CD8-positive, alpha-beta T cell (primary cell): ENCODE measurements at regions of chr14 and their contacts with region 1.

Region 1: DNA sequence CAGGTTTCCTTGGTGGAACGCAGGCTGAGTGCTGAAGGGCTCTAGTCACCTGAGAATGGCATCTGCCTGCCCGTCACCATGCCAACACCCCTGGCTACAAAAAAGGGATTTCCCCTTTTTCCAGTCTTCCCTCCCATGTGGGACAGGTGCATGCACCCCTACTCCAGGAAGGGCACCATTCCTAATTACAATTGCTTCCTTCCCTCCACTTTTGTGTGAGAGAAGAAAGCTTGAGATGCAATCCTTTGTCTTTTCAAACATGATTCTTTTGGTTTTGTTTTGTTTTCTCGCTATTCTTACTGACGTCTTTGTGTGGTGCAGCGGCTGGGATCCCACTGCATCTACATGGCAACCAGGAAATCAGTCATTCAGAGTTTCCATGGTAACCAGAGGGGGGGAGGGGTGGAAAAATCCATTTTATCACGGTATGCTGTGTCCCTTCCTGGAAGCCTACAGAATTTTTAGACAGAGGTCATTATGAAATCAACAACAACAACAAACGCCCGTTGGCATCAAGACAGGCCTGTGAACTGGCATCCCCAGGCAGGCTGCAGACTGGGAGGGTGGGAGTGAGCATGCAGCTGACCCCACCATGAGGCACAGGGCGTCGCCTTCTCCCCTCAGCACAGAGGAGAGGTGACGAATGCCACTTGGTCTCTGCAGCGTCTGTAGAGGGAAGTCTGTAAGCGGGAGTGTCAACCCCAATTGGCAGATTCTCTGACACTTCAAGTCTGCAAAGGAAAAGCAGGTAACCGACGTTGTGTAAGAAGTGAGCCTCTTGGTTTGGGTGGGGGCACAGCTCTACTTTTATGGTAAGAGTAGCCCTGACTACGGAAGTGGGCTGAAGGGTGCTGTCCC is 13.6 kb upstream of the GNG2 start:
- DNase-seq: peak; percentile 68 to 99 (median 85)
- ATAC-seq: peak; percentile 86
- H3K4me3 ChIP-seq: peak overlapping the region; percentile 47 to 53
- H3K4me3 Mint-ChIP-seq: peak overlapping the region; percentile 91
- H3K27ac ChIP-seq: peak overlapping the region; percentile 97 to 100
- H3K27ac Mint-ChIP-seq: peak overlapping the region; percentile 97
- H3K4me1 ChIP-seq: peaks cover 34% of the 10 kb centered on the region
- H3K4me1 Mint-ChIP-seq: peaks cover 64% of the 10 kb centered on the region
- H3K27me3 ChIP-seq: no peaks in the 10 kb centered on the region
- H3K27me3 Mint-ChIP-seq: no peaks in the 10 kb centered on the region
- CTCF ChIP-seq: no peak

Region 2: GRCh38 chr14:50311975-50312733 is 1534.7 kb before region 1 on chr14 and contains the starts of genes DMAC2L and L2HGDH:
- CTCF ChIA-PET with region 1: no interaction called
- POLR2A ChIA-PET with region 1: no interaction called
- intact Hi-C with region 1: loop called in 1 of 2 experiments (anchors 2 kb)
- DNase-seq: peak; percentile 67 to 95 (median 87)
- ATAC-seq: peak; percentile 88
- H3K4me3 ChIP-seq: peak within 1 kb of the TSS; percentile 65 to 72
- H3K4me3 Mint-ChIP-seq: peak within 1 kb of the TSS; percentile 95
- H3K27ac ChIP-seq: peak within 1 kb of the TSS; percentile 74 to 93
- H3K27ac Mint-ChIP-seq: peak within 1 kb of the TSS; percentile 99
- H3K4me1 ChIP-seq: peaks cover 15% of the 10 kb centered on the region
- H3K4me1 Mint-ChIP-seq: peaks cover 41% of the 10 kb centered on the region
- H3K27me3 ChIP-seq: no peaks in the 10 kb centered on the region
- H3K27me3 Mint-ChIP-seq: no peaks in the 10 kb centered on the region
- CTCF ChIP-seq: no peak
- total RNA-seq, gene DMAC2L: 16.6 to 17.8 TPM
- total RNA-seq, gene L2HGDH: 2.6 to 3.0 TPM

Region 3: GRCh38 chr14:51651388-51652167 is 195.3 kb before region 1 on chr14 and contains the start of gene FRMD6:
- CTCF ChIA-PET with region 1: no interaction called
- POLR2A ChIA-PET with region 1: no interaction called
- intact Hi-C with region 1: loop called (anchors 1 to 5 kb)
- DNase-seq: peak; percentile 58 to 90 (median 76)
- ATAC-seq: peak; percentile 82
- H3K4me3 ChIP-seq: peak within 1 kb of the TSS; percentile 87 to 94
- H3K4me3 Mint-ChIP-seq: peak within 1 kb of the TSS; percentile 85
- H3K27ac ChIP-seq: peak within 1 kb of the TSS; percentile 55 to 73
- H3K27ac Mint-ChIP-seq: peak within 1 kb of the TSS; percentile 73
- H3K4me1 ChIP-seq: peaks cover 19% of the 10 kb centered on the region
- H3K4me1 Mint-ChIP-seq: peaks cover 17% of the 10 kb centered on the region
- H3K27me3 ChIP-seq: peaks cover 6 to 16% of the 10 kb centered on the region in 2 experiments
- H3K27me3 Mint-ChIP-seq: peaks cover 21% of the 10 kb centered on the region
- CTCF ChIP-seq: peak; percentile 70
- total RNA-seq, gene FRMD6: 2.4 to 3.5 TPM

Region 4: GRCh38 chr14:51818748-51819380 is 28.0 kb before region 1 on chr14:
- CTCF ChIA-PET with region 1: no interaction called
- POLR2A ChIA-PET with region 1: no interaction called
- intact Hi-C with region 1: no loop called
- DNase-seq: no peak
- ATAC-seq: no peak
- H3K4me3 ChIP-seq: no peak overlapping the region
- H3K4me3 Mint-ChIP-seq: no peak overlapping the region
- H3K27ac ChIP-seq: no peak overlapping the region
- H3K27ac Mint-ChIP-seq: no peak overlapping the region
- H3K4me1 ChIP-seq: no peaks in the 10 kb centered on the region
- H3K4me1 Mint-ChIP-seq: no peaks in the 10 kb centered on the region
- H3K27me3 ChIP-seq: no peaks in the 10 kb centered on the region
- H3K27me3 Mint-ChIP-seq: peaks cover 5% of the 10 kb centered on the region
- CTCF ChIP-seq: no peak

Region 5: GRCh38 chr14:51860164-51860824 is 13.4 kb after region 1 on chr14 and contains the start of gene GNG2:
- CTCF ChIA-PET with region 1: interaction called, 12 read pairs
- POLR2A ChIA-PET with region 1: interaction called, 49 read pairs
- intact Hi-C with region 1: loop called (anchors 1 kb)
- DNase-seq: peak; percentile 71 to 94 (median 83)
- ATAC-seq: peak; percentile 95
- H3K4me3 ChIP-seq: peak within 1 kb of the TSS; percentile 86 to 90
- H3K4me3 Mint-ChIP-seq: peak within 1 kb of the TSS; percentile 98
- H3K27ac ChIP-seq: peak within 1 kb of the TSS; percentile 88
- H3K27ac Mint-ChIP-seq: peak within 1 kb of the TSS; percentile 95
- H3K4me1 ChIP-seq: peaks cover 50% of the 10 kb centered on the region
- H3K4me1 Mint-ChIP-seq: peaks cover 66% of the 10 kb centered on the region
- H3K27me3 ChIP-seq: no peaks in the 10 kb centered on the region
- H3K27me3 Mint-ChIP-seq: no peaks in the 10 kb centered on the region
- CTCF ChIP-seq: no peak
- total RNA-seq, gene GNG2: 166 to 169 TPM

Region 6: DNA sequence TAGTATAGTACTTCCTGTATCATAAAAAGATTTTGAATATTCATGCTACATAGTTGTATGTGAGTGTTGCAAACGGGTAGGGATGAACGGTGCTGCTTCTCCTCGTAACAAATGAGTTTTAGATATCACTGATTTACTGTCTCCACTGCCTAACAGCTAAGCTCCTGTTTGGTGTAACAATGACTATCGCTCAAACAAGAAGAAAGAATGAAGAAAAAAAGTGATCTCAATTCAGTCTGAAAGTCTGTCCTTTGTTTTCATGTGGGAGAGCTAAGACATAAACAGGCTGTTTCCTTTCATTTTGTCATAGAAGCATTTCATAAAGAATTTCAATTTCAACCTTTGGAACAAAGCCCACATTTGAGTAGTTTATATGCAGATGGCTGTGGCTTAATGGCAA is 116.4 kb after region 1 on chr14:
- CTCF ChIA-PET with region 1: no interaction called
- POLR2A ChIA-PET with region 1: interaction called, 4 read pairs
- intact Hi-C with region 1: loop called in 1 of 2 experiments (anchors 5 kb)
- DNase-seq: peak in 1 of 9 experiments; percentile 51
- ATAC-seq: peak; percentile 70
- H3K4me3 ChIP-seq: no peak overlapping the region
- H3K4me3 Mint-ChIP-seq: peak overlapping the region; percentile 64
- H3K27ac ChIP-seq: peak overlapping the region in 1 of 2 experiments; percentile 23
- H3K27ac Mint-ChIP-seq: peak overlapping the region; percentile 86
- H3K4me1 ChIP-seq: peaks cover 26% of the 10 kb centered on the region
- H3K4me1 Mint-ChIP-seq: peaks cover 48% of the 10 kb centered on the region
- H3K27me3 ChIP-seq: no peaks in the 10 kb centered on the region
- H3K27me3 Mint-ChIP-seq: no peaks in the 10 kb centered on the region
- CTCF ChIP-seq: no peak

Region 7: DNA sequence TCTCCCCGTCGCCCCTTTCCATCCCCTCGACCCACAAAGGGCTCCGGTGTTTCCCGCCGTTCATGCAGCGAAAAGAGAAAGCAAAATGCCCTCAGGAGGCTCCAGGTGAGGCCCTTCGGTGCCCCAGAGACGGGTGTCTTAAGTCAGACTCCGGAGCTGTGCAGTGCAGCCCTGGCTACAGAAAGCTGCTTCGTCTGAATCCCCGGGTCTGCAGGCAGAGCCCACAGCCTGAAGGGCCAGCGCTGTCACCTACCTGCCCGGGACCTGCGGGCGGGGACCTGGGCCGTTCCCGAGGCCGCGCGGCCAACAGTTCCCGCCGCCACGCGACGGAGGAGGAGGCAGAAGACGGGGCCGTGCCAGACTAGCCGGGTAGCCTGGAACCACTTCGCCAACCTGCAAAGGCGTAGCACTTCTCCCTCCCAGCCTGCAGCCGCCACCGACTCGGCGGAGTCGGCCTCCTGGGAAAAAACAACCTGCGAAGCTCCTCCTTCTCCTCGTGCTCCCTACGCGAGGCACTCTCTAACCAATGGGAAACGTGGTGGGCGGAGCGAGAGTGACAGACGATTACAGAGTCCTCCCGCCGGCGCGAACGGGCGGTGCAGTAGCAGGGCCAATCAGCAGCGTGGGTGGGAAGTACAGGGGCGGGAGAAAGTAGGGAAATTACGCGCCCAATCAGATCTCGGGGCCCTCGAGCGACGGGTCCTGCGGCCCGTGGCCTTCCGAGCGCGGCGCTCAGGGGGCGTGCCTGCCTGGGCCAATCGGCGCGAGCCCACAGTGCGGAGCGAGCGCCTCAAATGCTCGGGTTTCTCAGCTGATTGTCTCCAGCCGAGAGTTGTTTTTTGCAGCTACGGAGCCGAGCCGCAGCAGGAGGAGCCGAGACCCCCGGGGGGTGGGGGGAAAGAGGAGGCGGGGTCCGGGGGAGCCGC is 705.5 kb after region 1 on chr14 and contains the starts of genes GPR137C and TXNDC16:
- CTCF ChIA-PET with region 1: no interaction called
- POLR2A ChIA-PET with region 1: no interaction called
- intact Hi-C with region 1: loop called in 1 of 2 experiments (anchors 5 kb)
- DNase-seq: peak; percentile 98 to 100 (median 99)
- ATAC-seq: peak; percentile 85
- H3K4me3 ChIP-seq: peak within 1 kb of the TSS; percentile 77 to 86
- H3K4me3 Mint-ChIP-seq: peak within 1 kb of the TSS; percentile 95
- H3K27ac ChIP-seq: peak within 1 kb of the TSS; percentile 75 to 91
- H3K27ac Mint-ChIP-seq: peak within 1 kb of the TSS; percentile 90
- H3K4me1 ChIP-seq: peaks cover 21% of the 10 kb centered on the region
- H3K4me1 Mint-ChIP-seq: peaks cover 23% of the 10 kb centered on the region
- H3K27me3 ChIP-seq: no peaks in the 10 kb centered on the region
- H3K27me3 Mint-ChIP-seq: peaks cover 6% of the 10 kb centered on the region
- CTCF ChIP-seq: no peak
- total RNA-seq, gene GPR137C: 0.08 to 0.22 TPM
- total RNA-seq, gene TXNDC16: 10.8 to 13.4 TPM